ENCODE measurements at regions of chr16 and their contacts with region 1.

Region 1: DNA sequence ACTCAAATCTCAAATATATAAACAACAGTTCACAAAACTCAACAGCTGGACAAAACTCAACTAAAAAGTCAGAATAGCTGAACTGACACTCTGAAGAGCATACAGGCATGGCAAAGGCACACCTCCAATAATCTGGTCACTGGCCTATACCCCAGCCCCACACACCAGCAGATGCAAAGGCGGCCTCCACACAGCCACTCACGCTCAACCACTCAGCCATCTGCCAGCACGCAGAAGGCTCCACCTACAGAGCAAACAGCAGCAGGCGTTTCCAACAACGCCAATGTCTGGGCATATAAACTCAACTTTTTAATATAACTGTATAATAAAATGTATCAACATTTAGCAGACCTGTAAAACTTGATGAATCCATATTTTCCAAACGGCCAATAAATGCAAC is 17.2 kb downstream of the USP7 start:
- H3K4me3 ChIP-seq: no peak overlapping the region
- H3K27ac ChIP-seq: no peak overlapping the region
- H3K4me1 ChIP-seq: peaks cover 36% of the 10 kb centered on the region
- CTCF ChIP-seq: no peak

Region 2: GRCh38 chr16:8936421-8936820 is 10.1 kb before region 1 on chr16:
- CTCF ChIA-PET with region 1: interaction called, 32 read pairs
- POLR2A ChIA-PET with region 1: interaction called, 4 read pairs
- H3K4me3 ChIP-seq: no peak overlapping the region
- H3K27ac ChIP-seq: no peak overlapping the region
- H3K4me1 ChIP-seq: peaks cover 2% of the 10 kb centered on the region; the same call in 1 of the 2 replicates
- CTCF ChIP-seq: no peak

Measured in HEK293 (cell line).